ENCODE measurements at regions of chr11 and their contacts with region 1.

Region 1: DNA sequence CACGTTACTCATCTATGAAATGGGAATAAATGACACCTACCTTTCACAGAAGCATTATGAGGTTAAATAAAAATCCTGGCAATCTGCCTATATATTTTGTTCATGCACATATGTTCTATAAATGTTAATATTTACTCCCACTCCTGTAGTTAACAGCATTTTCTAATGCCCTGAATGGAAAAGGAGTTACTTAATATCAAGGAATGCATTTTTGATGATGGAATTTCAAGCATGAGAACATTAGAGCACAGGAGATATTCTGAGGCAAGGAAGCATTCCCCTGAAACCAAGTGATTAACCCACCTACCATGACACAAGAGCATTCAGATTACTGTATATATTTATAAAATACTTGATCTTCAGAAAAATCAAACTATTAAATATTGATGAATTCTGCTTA is 102.1 kb downstream of the ARHGAP32 start:
- DNase-seq: peak; percentile 56
- ATAC-seq: peak; percentile 79
- H3K4me3 ChIP-seq: no peak overlapping the region
- H3K27ac ChIP-seq: no peak overlapping the region
- H3K4me1 ChIP-seq: no peaks in the 10 kb centered on the region
- H3K27me3 ChIP-seq: no peaks in the 10 kb centered on the region
- CTCF ChIP-seq: no peak
- POLR2A ChIP-seq: no peak
- RAD21 ChIP-seq: no peak

Region 2: DNA sequence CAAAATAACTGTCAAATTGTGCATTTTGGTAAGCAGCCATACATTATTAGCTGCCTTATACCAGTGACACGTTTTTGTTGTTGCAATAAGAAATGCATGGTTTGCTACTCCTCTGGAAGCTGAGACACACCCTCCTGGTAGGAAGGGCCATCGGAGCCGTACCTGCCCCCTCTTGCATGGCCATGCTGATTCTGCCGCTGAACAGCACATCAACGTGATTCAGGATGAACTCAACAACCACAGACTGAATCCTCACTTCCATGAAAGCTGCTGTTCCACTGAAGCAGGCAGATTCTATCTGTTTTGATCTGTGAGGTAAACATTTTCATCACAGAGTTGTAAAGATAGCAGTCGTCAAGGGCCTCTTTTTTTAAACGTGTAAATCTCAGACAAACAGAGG is 108.8 kb before region 1 on chr11:
- CTCF ChIA-PET with region 1: no interaction called
- POLR2A ChIA-PET with region 1: no interaction called
- dilution Hi-C with region 1: no loop called
- in situ Hi-C with region 1: no loop called
- intact Hi-C with region 1: loop called (anchors 10 kb)
- DNase-seq: no peak
- ATAC-seq: no peak
- H3K4me3 ChIP-seq: no peak overlapping the region
- H3K27ac ChIP-seq: no peak overlapping the region
- H3K4me1 ChIP-seq: no peaks in the 10 kb centered on the region
- H3K27me3 ChIP-seq: no peaks in the 10 kb centered on the region
- CTCF ChIP-seq: no peak
- POLR2A ChIP-seq: no peak
- RAD21 ChIP-seq: no peak

Region 3: GRCh38 chr11:129418039-129418438 is 328.0 kb after region 1 on chr11:
- CTCF ChIA-PET with region 1: no interaction called
- POLR2A ChIA-PET with region 1: no interaction called
- dilution Hi-C with region 1: no loop called
- in situ Hi-C with region 1: no loop called
- intact Hi-C with region 1: no loop called
- DNase-seq: no peak
- ATAC-seq: no peak
- H3K4me3 ChIP-seq: no peak overlapping the region
- H3K27ac ChIP-seq: no peak overlapping the region
- H3K4me1 ChIP-seq: no peaks in the 10 kb centered on the region
- H3K27me3 ChIP-seq: no peaks in the 10 kb centered on the region
- CTCF ChIP-seq: no peak
- POLR2A ChIP-seq: no peak
- RAD21 ChIP-seq: no peak

Measured in IMR-90 (cell line).